RWPE1 (cell line): ENCODE measurements at regions of chr13 and their contacts with region 1.

Region 1: GRCh38 chr13:48094781-48095502 is at the start of gene MED4:
- DNase-seq: peak; percentile 95
- H3K27ac ChIP-seq: peak within 1 kb of the TSS; percentile 71
- CTCF ChIP-seq: peak; percentile 98

Region 2: DNA sequence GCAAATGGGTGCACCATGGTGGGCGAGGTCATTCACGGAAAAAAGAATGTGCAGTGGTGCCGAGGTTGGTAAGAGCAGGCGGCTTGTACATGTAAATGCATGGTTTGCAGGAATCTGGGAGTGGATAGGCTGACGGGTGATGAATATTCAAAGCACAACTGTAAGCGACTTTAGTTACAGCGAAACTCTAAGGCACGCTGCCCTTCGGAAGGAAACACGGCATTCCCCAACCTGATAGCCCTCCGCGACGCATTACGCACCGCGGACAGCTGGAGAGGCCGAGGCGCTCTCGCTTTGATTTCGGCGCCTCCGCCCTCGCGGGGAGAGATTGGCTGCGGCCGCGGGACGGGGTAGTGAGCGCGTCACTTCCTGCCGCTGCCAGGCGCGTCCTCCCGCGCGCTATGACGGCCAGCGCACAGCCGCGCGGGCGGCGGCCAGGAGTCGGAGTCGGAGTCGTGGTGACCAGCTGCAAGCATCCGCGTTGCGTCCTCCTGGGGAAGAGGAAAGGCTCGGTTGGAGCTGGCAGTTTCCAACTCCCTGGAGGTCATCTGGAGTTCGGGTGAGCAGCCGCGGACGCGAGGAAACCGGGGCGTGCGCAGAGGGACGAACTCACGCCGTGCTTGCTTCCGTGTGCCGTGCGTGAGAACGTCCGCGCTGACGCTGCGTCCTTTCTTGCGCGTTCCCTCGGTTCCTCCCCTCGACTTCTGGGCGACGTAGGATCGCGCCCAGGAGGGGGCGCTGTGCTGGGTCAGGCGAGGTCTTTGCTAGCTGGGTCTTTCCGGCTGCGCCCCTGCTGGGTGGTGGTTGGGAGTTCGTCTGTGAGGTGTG is 57.4 kb before region 1 on chr13 and contains the start of gene NUDT15:
- CTCF ChIA-PET with region 1: interaction called, 12 read pairs
- POLR2A ChIA-PET with region 1: no interaction called
- DNase-seq: peak; percentile 93
- H3K27ac ChIP-seq: peak within 1 kb of the TSS; percentile 98
- CTCF ChIP-seq: peak; percentile 94

Region 3: GRCh38 chr13:48235341-48236135 is 140.6 kb after region 1 on chr13:
- CTCF ChIA-PET with region 1: interaction called, 16 read pairs
- POLR2A ChIA-PET with region 1: no interaction called
- DNase-seq: no peak
- H3K27ac ChIP-seq: no peak overlapping the region
- CTCF ChIP-seq: no peak